ENCODE measurements at regions of chr20 and their contacts with region 1.

Region 1: GRCh38 chr20:46022411-46023147 is 6.4 kb upstream of the SLC12A5 start:
- DNase-seq: peak in 1 of 2 donors; percentile 74
- ATAC-seq: peak; percentile 66

Region 2: GRCh38 chr20:46108435-46108841 is 85.9 kb after region 1 on chr20:
- intact Hi-C with region 1: loop called in 1 of 2 experiments (anchors 10 kb)
- DNase-seq: no peak
- ATAC-seq: no peak

Region 3: DNA sequence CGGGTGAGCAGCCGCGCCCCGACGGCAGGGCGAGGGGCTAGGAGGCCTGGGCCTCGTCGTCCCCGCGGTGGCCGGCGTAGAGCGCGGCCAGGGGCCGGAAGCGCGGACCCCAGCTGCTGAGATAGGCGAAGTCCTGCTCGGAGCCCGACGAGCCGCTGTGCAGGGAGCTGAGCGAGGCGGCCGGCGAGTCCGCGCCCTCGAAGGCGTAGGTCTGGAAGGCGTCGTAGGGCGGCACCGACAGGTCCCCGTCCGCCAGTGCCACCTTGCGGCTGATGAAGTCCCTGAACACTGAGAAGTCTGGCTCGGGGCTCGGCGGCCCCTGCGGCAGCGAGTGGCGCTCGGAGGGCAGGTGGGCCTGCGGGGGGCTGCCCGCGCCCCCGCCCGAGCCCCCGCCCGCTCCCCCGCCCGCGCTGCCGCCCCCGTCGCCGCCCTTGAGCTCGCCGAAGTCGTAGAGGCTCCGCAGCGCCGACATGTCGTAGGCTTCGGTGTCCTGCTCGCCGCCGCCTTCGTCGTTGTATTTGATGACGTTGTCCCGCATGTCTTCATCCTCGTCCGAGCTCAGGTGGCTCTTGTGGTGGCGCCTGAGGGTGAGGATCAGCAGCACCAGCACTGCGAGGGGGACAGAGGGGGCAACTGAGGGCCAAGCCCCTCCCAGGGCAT is 152.0 kb after region 1 on chr20:
- intact Hi-C with region 1: loop called in 1 of 2 experiments (anchors 5 kb)
- DNase-seq: peak; percentile 33 to 84
- ATAC-seq: peak; percentile 91